Activated T-helper 1 cell treated with anti-CD3 and anti-CD28 coated beads, Interleukin-12 subunit alpha, Interleukin-12 subunit beta, Interleukin-2, Interleukin-4 antibody, amounts not matched to agents 30 ng/mL and 10 ng/mL and 1 ng/mL, durations not matched to agents 14 hours and 24 hours and 36 hours (primary cell): ENCODE measurements at regions of chr1 and their contacts with region 1.

Region 1: GRCh38 chr1:110338886-110339406 is at the start of gene RBM15:
- DNase-seq: peak; percentile 98
- H3K4me3 Mint-ChIP-seq: no peak within 1 kb of the TSS
- H3K27ac Mint-ChIP-seq: peak within 1 kb of the TSS; percentile 98
- H3K4me1 Mint-ChIP-seq: peaks cover 54% of the 10 kb centered on the region
- H3K27me3 Mint-ChIP-seq: no peaks in the 10 kb centered on the region
- total RNA-seq, gene RBM15: 58.5 and 59.0 TPM in 2 replicates

Region 2: GRCh38 chr1:109090196-109091077 is 1248.5 kb before region 1 on chr1 and contains the start of gene TMEM167B:
- intact Hi-C with region 1: loop called (anchors 2 kb)
- DNase-seq: peak; percentile 84
- H3K4me3 Mint-ChIP-seq: peak within 1 kb of the TSS; percentile 92
- H3K27ac Mint-ChIP-seq: peak within 1 kb of the TSS; percentile 93
- H3K4me1 Mint-ChIP-seq: peaks cover 21% of the 10 kb centered on the region
- H3K27me3 Mint-ChIP-seq: peaks cover 2% of the 10 kb centered on the region
- total RNA-seq, gene TMEM167B: 26.2 and 27.6 TPM in 2 replicates

Region 3: DNA sequence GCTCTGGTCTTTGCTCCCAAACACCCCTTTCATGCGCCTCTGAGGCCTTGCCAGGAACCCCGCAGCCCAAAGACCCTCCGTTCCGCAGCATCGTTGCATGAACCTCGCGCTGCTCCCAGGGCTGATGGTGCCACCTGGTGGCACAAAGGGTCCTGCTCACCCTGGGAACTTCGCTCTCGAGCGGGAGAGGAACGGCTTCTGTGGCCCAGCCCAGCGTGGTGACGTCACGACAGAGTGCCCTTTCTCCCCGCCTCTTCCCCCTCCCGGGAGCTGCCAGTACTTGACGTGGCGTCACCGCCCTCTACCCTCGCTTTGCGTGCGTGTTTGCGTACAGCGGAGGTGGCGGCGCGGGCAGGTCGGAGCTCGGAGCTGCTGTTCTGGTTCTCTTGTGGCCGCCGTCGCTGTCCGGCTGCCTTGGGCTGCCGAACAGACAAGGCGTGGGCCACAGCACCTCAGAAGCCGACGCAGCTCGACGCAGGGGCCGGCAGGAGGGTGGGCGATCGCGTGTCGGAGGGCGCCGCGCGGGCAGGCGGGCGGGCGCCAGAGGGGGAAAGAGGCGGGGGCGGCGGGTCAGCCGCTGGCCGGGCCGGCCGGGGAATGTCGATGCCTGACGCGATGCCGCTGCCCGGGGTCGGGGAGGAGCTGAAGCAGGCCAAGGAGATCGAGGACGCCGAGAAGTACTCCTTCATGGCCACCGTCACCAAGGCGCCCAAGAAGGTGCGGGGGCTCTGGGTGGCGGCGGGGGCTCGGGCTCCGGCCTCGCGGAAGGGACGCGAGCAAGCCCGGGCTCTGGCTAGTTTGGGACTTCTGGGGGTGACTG is 354.3 kb before region 1 on chr1 and contains the start of gene AHCYL1:
- intact Hi-C with region 1: loop called (anchors 1 kb)
- DNase-seq: peak; percentile 99
- H3K4me3 Mint-ChIP-seq: peak within 1 kb of the TSS; percentile 93
- H3K27ac Mint-ChIP-seq: peak within 1 kb of the TSS; percentile 97
- H3K4me1 Mint-ChIP-seq: peaks cover 36% of the 10 kb centered on the region
- H3K27me3 Mint-ChIP-seq: peaks cover 4% of the 10 kb centered on the region
- total RNA-seq, gene AHCYL1: 63.8 and 64.1 TPM in 2 replicates

Region 4: DNA sequence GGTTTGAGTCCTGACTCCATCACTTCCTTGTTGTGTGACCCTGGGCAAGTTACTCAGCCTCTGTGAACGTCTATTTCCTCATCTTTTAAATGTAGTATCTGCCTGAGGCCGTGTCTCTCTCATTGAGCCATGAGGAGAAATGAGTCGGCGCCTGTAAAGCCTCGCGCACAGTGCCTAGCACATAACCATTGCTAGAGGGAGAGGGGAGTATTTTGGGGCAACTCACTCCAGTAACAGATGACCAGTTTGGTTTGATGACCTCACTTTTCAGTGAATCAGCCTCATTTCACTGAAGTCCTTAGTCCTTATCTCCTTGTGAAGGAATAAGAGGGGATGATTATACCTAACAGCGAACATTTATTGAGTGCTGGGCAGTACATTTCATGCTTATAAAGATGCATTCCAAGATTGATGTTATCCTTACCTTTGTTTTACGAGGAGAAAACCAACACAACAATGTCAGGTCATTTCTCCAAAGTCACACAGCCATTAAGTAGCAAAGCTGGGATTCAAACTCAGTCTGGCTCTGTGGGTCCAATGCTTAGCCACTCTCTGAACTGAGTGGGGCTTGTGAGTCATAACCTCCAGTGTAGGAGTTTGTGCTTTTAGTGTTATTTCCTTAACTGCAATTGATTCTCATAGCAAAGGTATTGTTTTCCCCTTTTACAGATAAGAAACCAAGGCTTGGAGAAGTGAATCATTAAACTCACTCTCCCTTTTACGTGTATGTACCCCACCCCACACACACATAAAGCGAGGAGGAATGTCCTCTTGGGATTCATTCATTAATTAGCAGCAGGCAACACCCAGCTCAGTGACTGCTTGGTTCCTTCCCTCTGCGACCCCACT is 102.9 kb before region 1 on chr1:
- intact Hi-C with region 1: loop called (anchors 1 kb)
- DNase-seq: no peak
- H3K4me3 Mint-ChIP-seq: no peak overlapping the region
- H3K27ac Mint-ChIP-seq: peak overlapping the region; percentile 80
- H3K4me1 Mint-ChIP-seq: peaks cover 51% of the 10 kb centered on the region
- H3K27me3 Mint-ChIP-seq: no peaks in the 10 kb centered on the region

Region 5: DNA sequence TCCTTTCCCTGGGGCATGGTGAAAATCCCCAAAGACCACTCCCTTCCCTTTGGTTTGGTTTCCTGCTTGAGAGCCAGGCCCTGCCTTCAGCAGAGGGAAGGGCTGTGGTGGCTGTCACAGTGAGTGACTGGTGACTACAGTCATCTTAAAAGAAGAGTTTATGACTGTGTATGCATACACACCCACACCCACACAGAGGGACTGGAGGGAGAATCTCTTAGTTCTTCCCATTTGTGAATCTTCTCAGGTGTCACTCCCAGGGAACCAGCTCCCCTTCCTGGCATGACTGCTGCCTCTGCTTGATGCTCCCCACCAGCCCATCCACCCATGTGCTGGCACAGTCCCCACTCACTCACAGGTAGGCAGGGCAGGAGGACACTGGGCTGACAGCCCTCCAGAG is 271.1 kb after region 1 on chr1:
- intact Hi-C with region 1: loop called (anchors 1 kb)
- DNase-seq: no peak
- H3K4me3 Mint-ChIP-seq: no peak overlapping the region
- H3K27ac Mint-ChIP-seq: no peak overlapping the region
- H3K4me1 Mint-ChIP-seq: peaks cover 48% of the 10 kb centered on the region
- H3K27me3 Mint-ChIP-seq: peaks cover 33% of the 10 kb centered on the region

Region 6: DNA sequence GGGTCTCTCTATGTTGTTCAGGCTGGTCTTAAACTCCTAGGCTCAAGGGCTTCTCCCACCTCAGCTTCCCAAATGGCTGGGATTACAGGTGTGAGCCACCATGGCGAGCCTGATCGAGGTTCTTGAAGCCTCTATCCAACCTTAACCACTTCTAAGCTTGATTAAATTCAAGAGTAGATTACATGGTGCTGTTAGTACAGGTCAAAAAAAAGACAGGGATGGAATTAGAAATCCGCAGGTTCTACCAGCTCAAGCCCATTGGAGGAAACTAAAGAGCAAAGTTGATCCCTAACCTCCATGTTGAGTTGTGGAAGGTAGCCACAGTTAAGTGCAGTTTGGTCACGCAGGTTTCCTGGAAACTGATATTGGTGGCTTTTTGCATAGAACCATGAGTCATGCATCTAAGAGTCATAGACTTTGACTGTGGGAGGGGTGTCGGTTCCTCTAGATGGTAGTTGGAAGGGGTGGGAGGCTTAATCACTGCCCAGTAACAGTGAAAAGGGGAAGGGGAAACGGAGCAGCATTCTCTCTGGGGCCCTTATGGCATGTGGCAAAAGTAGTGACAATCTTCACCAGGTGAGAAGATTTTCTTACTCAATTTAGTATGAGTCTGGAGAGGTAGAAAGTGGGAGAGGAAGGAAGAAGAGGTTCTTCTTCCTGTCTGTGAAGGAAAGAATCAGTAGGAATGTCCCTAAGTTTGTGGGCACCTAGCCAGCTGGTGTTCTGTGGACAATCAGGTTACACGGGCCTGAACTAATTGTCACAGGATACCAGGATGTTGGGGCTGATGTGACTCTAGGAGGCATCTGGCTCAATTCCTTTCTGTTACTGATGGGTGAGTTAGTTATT is 541.0 kb after region 1 on chr1:
- intact Hi-C with region 1: loop called (anchors 2 kb)
- DNase-seq: peak; percentile 74
- H3K4me3 Mint-ChIP-seq: peak overlapping the region; percentile 78
- H3K27ac Mint-ChIP-seq: peak overlapping the region; percentile 99
- H3K4me1 Mint-ChIP-seq: peaks cover 84% of the 10 kb centered on the region
- H3K27me3 Mint-ChIP-seq: no peaks in the 10 kb centered on the region